GM12878 (cell line): ENCODE measurements at regions of chr3 and their contacts with region 1.

Region 1: GRCh38 chr3:32733631-32734229 is 48.7 kb downstream of the CNOT10 start:
- DNase-seq: peak; percentile 4
- ATAC-seq: peak; percentile 73
- H3K4me3 ChIP-seq: no peak overlapping the region
- H3K27ac ChIP-seq: no peak overlapping the region
- H3K4me1 ChIP-seq: no peaks in the 10 kb centered on the region
- H3K27me3 ChIP-seq: no peaks in the 10 kb centered on the region
- CTCF ChIP-seq: peak; percentile 48 to 57 (median 57); a peak in 5 of 6 replicates
- EP300 ChIP-seq: no peak
- POLR2A ChIP-seq: no peak
- RAD21 ChIP-seq: peak; percentile 64

Region 2: GRCh38 chr3:31754575-31755278 is 979.0 kb before region 1 on chr3:
- CTCF ChIA-PET with region 1: no interaction called
- POLR2A ChIA-PET with region 1: no interaction called
- RAD21 ChIA-PET with region 1: no interaction called
- SMC1A ChIA-PET with region 1: no interaction called
- in situ Hi-C with region 1: no loop called
- intact Hi-C with region 1: no loop called
- DNase-seq: peak; percentile 55
- ATAC-seq: peak; percentile 93
- H3K4me3 ChIP-seq: no peak overlapping the region
- H3K27ac ChIP-seq: no peak overlapping the region
- H3K4me1 ChIP-seq: peaks cover 5% of the 10 kb centered on the region
- H3K27me3 ChIP-seq: peaks cover 0 to 3% of the 10 kb centered on the region in 2 experiments; a peak in 1 of 4 replicates
- CTCF ChIP-seq: no peak
- EP300 ChIP-seq: peak in 1 of 2 experiments; percentile 67; a peak in 1 of 4 replicates
- POLR2A ChIP-seq: no peak
- RAD21 ChIP-seq: no peak

Region 3: GRCh38 chr3:32097768-32098167 is 636.0 kb before region 1 on chr3:
- CTCF ChIA-PET with region 1: no interaction called
- POLR2A ChIA-PET with region 1: no interaction called
- RAD21 ChIA-PET with region 1: no interaction called
- SMC1A ChIA-PET with region 1: no interaction called
- in situ Hi-C with region 1: no loop called
- intact Hi-C with region 1: no loop called
- DNase-seq: no peak
- ATAC-seq: peak; percentile 79
- H3K4me3 ChIP-seq: no peak overlapping the region
- H3K27ac ChIP-seq: no peak overlapping the region
- H3K4me1 ChIP-seq: peaks cover 6% of the 10 kb centered on the region
- H3K27me3 ChIP-seq: no peaks in the 10 kb centered on the region
- CTCF ChIP-seq: no peak
- EP300 ChIP-seq: no peak
- POLR2A ChIP-seq: no peak
- RAD21 ChIP-seq: no peak

Region 4: GRCh38 chr3:32712611-32713010 is 21.1 kb before region 1 on chr3:
- CTCF ChIA-PET with region 1: interaction called, 10 read pairs
- POLR2A ChIA-PET with region 1: no interaction called
- RAD21 ChIA-PET with region 1: no interaction called
- SMC1A ChIA-PET with region 1: interaction called, 4 read pairs
- in situ Hi-C with region 1: no loop called
- intact Hi-C with region 1: no loop called
- DNase-seq: no peak
- ATAC-seq: no peak
- H3K4me3 ChIP-seq: no peak overlapping the region
- H3K27ac ChIP-seq: no peak overlapping the region
- H3K4me1 ChIP-seq: no peaks in the 10 kb centered on the region
- H3K27me3 ChIP-seq: no peaks in the 10 kb centered on the region
- CTCF ChIP-seq: no peak
- EP300 ChIP-seq: no peak
- POLR2A ChIP-seq: no peak
- RAD21 ChIP-seq: no peak

Region 5: DNA sequence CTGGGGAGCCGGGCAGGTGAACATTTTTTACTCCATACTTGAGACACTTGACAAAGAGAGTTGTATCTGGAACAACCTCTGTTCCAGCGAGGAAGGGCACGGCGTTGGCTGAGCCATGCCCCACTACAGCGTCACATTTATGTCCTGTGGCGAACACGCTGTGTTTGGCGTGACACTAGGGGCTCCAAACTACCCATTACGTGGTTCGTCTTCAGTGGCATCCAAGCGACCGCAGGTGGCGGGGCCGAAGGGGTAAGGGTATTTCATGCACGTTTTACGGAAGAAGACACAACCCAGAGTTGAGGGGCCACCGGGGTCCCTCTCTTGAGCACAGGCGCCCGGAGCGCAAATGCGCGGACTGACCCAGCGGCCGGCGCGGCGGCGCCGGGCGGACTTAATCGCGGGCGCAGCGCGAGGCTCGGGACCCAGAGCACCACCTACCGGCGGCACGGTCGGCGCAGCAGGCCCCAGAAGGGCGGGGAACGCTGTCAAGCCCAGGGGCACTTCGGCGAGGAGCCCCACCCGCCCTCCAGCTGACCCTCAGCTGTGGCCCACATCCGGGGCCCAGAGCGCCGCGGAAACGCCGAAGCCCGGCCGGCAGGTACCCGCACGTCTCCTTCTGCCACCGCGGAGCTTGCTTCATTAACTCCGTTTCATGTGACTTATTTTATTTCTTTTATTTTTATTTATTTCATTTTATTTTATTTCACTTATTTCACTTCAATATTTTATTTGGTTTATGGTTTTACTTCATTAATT is 47.7 kb after region 1 on chr3:
- CTCF ChIA-PET with region 1: interaction called, 13 read pairs
- POLR2A ChIA-PET with region 1: no interaction called
- RAD21 ChIA-PET with region 1: interaction called, 5 read pairs
- SMC1A ChIA-PET with region 1: interaction called, 4 read pairs
- in situ Hi-C with region 1: no loop called
- intact Hi-C with region 1: no loop called
- DNase-seq: peak; percentile 26
- ATAC-seq: peak; percentile 99
- H3K4me3 ChIP-seq: peak overlapping the region; percentile 66
- H3K27ac ChIP-seq: no peak overlapping the region
- H3K4me1 ChIP-seq: no peaks in the 10 kb centered on the region
- H3K27me3 ChIP-seq: no peaks in the 10 kb centered on the region
- CTCF ChIP-seq: peak; percentile 77 to 87 (median 86)
- EP300 ChIP-seq: no peak
- POLR2A ChIP-seq: no peak
- RAD21 ChIP-seq: peak; percentile 51

Region 6: DNA sequence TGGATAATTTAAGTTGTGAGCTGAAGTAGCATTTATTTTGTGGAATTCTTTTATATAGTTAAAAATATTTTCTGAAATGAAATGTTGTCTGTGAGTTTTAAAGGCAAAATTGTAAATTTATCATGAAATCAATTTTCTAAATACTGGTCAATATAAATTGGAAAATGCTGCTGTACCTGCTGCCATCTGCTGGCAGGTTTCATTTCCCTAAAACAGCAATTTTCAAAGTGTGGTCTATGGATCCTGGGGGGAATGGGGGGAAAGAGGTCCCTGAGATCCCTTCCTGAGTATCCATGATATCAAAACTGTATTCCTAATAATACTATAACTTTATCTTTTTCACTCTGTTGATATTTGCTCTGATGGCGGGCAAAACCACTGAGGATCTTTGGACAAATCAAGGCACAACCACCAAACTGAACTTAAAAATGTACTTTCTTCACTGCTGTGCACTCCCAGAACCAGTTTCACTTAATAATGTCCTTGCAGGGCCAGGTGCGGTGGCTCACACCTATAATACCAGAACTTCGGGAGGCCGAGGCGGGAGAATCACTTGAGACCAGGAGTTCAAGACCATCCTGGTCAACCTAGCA is 200.5 kb after region 1 on chr3:
- CTCF ChIA-PET with region 1: interaction called, 46 read pairs
- POLR2A ChIA-PET with region 1: no interaction called
- RAD21 ChIA-PET with region 1: interaction called, 13 read pairs
- SMC1A ChIA-PET with region 1: interaction called, 35 read pairs
- in situ Hi-C with region 1: loop called (anchors 5 kb)
- intact Hi-C with region 1: loop called (anchors 1 kb)
- DNase-seq: no peak
- ATAC-seq: peak; percentile 68
- H3K4me3 ChIP-seq: no peak overlapping the region
- H3K27ac ChIP-seq: no peak overlapping the region
- H3K4me1 ChIP-seq: no peaks in the 10 kb centered on the region
- H3K27me3 ChIP-seq: no peaks in the 10 kb centered on the region; a peak in 1 of 4 replicates
- CTCF ChIP-seq: peak; percentile 59 to 73 (median 70)
- EP300 ChIP-seq: no peak
- POLR2A ChIP-seq: no peak
- RAD21 ChIP-seq: peak; percentile 80